Activated CD4-positive, alpha-beta memory T cell treated with anti-CD3 and anti-CD28 coated beads for 36 hours (primary cell): ENCODE measurements at regions of chr17 and their contacts with region 1.

Region 1: DNA sequence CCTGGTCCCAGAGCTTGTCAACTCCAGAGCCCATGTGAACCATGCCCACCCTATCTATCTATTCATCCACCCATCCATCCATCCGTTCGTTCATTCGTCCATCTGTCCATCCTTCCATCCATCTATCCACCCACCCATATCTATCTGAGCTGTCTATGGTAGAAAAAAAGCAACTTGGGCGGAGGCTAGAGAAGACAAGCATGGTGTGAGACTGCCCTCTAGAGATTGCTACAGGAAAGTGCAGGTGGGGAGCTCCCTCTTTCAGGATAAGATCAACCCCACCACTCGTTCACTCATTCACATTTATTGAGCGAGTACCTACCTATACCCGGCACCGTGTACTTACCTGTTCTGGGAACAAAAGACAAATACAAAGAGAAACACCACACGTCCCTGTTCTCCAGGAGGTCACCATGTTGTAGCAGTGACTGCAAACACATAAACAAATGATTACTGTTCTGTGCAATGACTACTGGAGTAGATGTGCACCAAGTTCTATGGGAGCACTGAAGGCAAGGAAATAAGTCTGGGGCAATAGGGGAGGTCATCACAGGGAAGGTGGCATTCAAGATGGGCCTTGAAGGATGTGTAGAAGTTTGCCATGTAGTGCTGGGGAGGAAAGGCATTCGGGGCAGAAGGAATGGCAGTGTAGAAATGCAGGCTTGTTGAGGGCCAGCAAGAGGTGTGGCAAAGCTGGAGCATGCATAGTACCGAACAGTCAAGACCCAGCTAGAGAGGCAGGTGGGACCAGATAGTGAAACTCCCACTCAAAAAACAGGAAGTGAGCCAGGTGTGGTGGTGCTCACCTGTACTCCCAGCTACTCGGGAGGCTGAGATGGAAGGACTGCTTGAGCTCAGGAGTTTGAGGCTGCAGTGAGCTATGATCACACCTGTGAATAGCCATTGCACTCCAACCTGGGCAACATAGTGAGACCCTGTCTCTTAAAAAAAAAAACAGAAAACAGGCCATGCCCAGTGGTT is 13.4 kb upstream of the ATP5MC1 start:
- DNase-seq: peak; percentile 64
- H3K4me3 Mint-ChIP-seq: no peak overlapping the region
- H3K27ac Mint-ChIP-seq: no peak overlapping the region
- H3K4me1 Mint-ChIP-seq: no peaks in the 10 kb centered on the region
- H3K27me3 Mint-ChIP-seq: peaks cover 5% of the 10 kb centered on the region

Region 2: DNA sequence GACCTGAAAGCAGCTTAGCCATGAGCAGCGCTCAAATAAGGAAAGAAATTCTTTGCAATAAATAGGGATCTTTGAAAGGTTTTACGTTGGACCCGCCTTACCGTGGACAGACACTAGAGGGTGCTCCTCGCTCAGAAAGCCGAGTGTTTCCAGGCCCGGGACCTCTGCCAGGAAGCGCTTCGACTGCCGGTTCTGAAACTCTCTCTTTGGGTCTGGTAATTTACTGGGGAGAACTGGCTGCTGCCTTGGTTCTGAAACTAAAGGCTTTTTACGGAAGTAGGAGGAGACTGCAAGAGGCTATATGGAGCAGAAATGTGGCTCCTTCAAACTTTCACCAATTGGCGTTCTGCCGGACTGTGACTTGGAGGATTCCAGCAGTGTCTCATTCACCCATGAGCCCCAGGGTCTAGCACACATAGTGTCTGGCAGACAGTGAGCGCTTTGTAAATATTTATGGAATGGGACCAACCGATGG is 207.5 kb before region 1 on chr17:
- CTCF ChIA-PET with region 1: interaction called, 119 read pairs
- POLR2A ChIA-PET with region 1: no interaction called
- intact Hi-C with region 1: no loop called
- DNase-seq: peak; percentile 74
- H3K4me3 Mint-ChIP-seq: peak overlapping the region; percentile 8
- H3K27ac Mint-ChIP-seq: no peak overlapping the region
- H3K4me1 Mint-ChIP-seq: peaks cover 5% of the 10 kb centered on the region
- H3K27me3 Mint-ChIP-seq: peaks cover 23% of the 10 kb centered on the region

Region 3: GRCh38 chr17:48724251-48725003 is 154.8 kb before region 1 on chr17:
- CTCF ChIA-PET with region 1: interaction called, 57 read pairs
- POLR2A ChIA-PET with region 1: no interaction called
- intact Hi-C with region 1: loop called (anchors 2 kb)
- DNase-seq: peak; percentile 87
- H3K4me3 Mint-ChIP-seq: no peak overlapping the region
- H3K27ac Mint-ChIP-seq: no peak overlapping the region
- H3K4me1 Mint-ChIP-seq: peaks cover 36% of the 10 kb centered on the region
- H3K27me3 Mint-ChIP-seq: peaks cover 90% of the 10 kb centered on the region

Region 4: GRCh38 chr17:48804925-48805411 is 74.2 kb before region 1 on chr17:
- CTCF ChIA-PET with region 1: interaction called, 614 read pairs
- POLR2A ChIA-PET with region 1: no interaction called
- intact Hi-C with region 1: loop called (anchors 1 kb)
- DNase-seq: peak; percentile 76
- H3K4me3 Mint-ChIP-seq: no peak overlapping the region
- H3K27ac Mint-ChIP-seq: no peak overlapping the region
- H3K4me1 Mint-ChIP-seq: no peaks in the 10 kb centered on the region
- H3K27me3 Mint-ChIP-seq: peaks cover 11% of the 10 kb centered on the region

Region 5: DNA sequence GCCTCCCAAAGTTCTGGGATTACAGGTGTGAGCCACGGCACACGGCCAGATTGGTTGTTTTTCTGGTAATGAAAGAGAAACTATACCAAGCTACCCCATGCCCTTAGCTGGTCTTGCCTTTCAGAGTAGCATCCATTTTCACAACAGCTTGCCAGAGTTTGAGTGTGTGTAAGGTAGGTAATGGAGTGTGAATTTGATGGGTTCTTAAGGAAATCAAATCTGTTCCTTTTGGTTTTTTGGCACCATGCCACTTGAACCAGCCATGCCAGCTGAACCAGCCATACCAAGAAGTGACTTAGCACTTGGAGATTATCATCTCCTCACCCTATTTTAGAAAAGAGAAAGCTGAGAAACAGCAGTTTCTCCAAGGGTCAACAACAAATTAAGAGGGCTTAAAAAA is 43.2 kb before region 1 on chr17:
- CTCF ChIA-PET with region 1: interaction called, 26 read pairs
- POLR2A ChIA-PET with region 1: no interaction called
- intact Hi-C with region 1: no loop called
- DNase-seq: peak; percentile 17
- H3K4me3 Mint-ChIP-seq: no peak overlapping the region
- H3K27ac Mint-ChIP-seq: no peak overlapping the region
- H3K4me1 Mint-ChIP-seq: peaks cover 74% of the 10 kb centered on the region
- H3K27me3 Mint-ChIP-seq: peaks cover 3% of the 10 kb centered on the region

Region 6: DNA sequence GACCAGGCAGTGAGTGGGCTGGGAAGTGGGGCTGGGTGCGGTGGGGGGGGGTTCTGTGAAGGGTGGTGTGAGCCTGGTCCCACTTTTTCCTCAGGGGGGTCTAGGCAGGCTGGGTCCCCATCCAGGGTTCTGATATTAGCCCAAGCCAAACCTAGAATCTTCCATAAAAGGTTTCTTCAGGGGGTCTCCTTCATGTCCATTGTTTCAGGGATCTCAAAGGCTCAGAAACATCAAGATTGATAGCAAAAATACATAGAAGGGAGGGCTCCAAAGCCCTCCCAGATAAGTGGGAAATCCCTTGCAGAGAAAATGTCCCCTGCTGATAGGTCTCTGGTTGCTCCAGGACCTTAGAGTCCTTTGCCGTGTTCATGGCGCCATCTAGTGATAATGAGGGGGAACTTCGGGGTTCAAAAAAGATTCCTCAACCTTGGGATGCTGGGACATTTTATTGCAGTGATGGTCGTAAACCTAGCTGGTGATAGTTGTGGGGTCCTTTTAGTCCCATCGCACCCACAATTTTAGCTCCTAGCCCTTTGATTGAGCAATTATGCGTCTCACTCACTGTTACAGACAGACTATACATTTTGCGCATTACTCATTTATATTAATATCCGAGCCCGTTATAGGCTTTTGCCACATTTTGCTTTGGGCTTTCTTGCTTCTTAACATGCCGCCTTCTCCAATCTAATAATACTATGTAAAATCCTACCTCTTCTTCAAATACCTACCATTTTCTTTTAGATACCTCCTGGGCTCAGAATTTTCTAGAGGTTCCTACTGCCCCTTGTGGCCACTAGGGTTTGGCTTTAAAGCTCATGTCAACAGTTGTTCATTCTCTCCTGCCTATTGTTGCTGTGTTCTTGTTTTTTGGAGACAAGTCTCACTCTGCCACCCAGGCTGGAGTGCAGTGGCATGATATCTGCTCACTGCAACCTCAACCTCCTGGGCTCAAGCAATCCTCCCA is 153.0 kb after region 1 on chr17:
- CTCF ChIA-PET with region 1: interaction called, 23 read pairs
- POLR2A ChIA-PET with region 1: no interaction called
- intact Hi-C with region 1: loop called (anchors 1 kb)
- DNase-seq: peak; percentile 55
- H3K4me3 Mint-ChIP-seq: no peak overlapping the region
- H3K27ac Mint-ChIP-seq: no peak overlapping the region
- H3K4me1 Mint-ChIP-seq: no peaks in the 10 kb centered on the region
- H3K27me3 Mint-ChIP-seq: peaks cover 3% of the 10 kb centered on the region